ENCODE measurements at regions of chr1 and their contacts with region 1.

Region 1: GRCh38 chr1:89104147-89104546 is 21.8 kb downstream of the GBP2 start:
- DNase-seq: no peak
- ATAC-seq: no peak
- H3K4me3 ChIP-seq: no peak overlapping the region
- H3K4me3 Mint-ChIP-seq: no peak overlapping the region
- H3K27ac ChIP-seq: no peak overlapping the region
- H3K27ac Mint-ChIP-seq: peak overlapping the region; percentile 6
- H3K4me1 ChIP-seq: no peaks in the 10 kb centered on the region
- H3K4me1 Mint-ChIP-seq: peaks cover 3% of the 10 kb centered on the region
- H3K27me3 ChIP-seq: no peaks in the 10 kb centered on the region
- H3K27me3 Mint-ChIP-seq: no peaks in the 10 kb centered on the region
- CTCF ChIP-seq: no peak

Region 2: DNA sequence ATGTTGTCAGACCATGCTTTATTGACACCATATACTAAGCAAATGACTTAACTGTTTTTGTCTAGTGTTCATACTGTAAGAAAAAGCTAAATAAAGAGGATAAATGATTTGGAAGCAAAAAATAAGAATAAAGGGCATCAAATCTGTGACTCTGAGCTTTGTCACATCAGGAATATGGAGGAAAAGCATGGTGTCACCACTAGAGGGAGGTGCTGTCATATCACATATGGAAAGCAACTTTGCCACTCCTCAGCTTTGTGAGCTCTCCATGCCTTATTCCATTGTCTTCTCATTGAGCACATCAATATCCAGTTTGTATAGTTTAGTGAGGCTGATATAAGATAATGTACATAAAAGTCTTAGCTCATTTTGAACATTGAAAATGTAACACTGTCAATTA is 18.4 kb before region 1 on chr1:
- CTCF ChIA-PET with region 1: no interaction called
- POLR2A ChIA-PET with region 1: interaction called, 4 read pairs
- intact Hi-C with region 1: loop called in 1 of 2 experiments (anchors 2 kb)
- DNase-seq: peak in 4 of 9 experiments; percentile 33 to 73 (median 51)
- ATAC-seq: peak; percentile 57
- H3K4me3 ChIP-seq: no peak overlapping the region
- H3K4me3 Mint-ChIP-seq: no peak overlapping the region
- H3K27ac ChIP-seq: no peak overlapping the region
- H3K27ac Mint-ChIP-seq: no peak overlapping the region
- H3K4me1 ChIP-seq: no peaks in the 10 kb centered on the region
- H3K4me1 Mint-ChIP-seq: no peaks in the 10 kb centered on the region
- H3K27me3 ChIP-seq: no peaks in the 10 kb centered on the region
- H3K27me3 Mint-ChIP-seq: no peaks in the 10 kb centered on the region
- CTCF ChIP-seq: peak; percentile 59